ENCODE measurements at regions of chr12 and their contacts with region 1.

Region 1: GRCh38 chr12:50504798-50505385 is at the start of gene DIP2B:
- DNase-seq: peak; percentile 60
- H3K4me3 ChIP-seq: peak within 1 kb of the TSS; percentile 90
- H3K27ac ChIP-seq: peak within 1 kb of the TSS; percentile 57
- H3K27me3 ChIP-seq: no peaks in the 10 kb centered on the region
- CTCF ChIP-seq: peak; percentile 91
- polyA plus RNA-seq, gene DIP2B: 18.9 and 22.0 TPM in 2 replicates

Region 2: DNA sequence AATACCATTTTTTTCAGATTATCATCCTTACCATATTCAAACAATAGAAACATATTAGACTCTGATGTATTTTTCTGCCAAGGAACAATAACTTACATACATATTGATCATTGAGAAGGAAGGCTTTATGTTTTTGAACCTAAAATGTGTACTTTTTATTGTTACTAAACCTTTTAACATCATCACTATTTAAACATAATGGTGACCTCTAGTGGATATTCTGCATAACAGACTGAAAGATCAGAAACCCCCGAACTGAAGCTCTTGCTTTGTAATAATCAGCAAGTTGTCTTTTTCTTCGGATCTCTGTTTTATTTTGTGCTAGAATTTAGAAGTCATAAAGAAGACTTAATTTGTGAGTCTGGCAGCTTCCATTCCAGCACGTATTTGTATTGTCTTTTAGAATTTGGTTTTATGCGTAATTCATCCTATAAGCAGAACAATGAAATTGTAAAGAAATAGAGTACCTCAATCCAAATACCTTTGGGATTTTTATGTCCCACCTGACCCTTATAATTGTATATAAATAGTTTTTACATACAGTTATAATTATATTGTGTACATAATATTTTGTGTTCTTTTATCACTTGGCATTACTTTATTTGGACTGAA is 133.1 kb after region 1 on chr12:
- CTCF ChIA-PET with region 1: interaction called, 29 read pairs
- POLR2A ChIA-PET with region 1: no interaction called
- DNase-seq: no peak
- H3K4me3 ChIP-seq: no peak overlapping the region
- H3K27ac ChIP-seq: no peak overlapping the region
- H3K27me3 ChIP-seq: no peaks in the 10 kb centered on the region
- CTCF ChIP-seq: peak; percentile 59

Region 3: GRCh38 chr12:50734409-50735263 is 229.7 kb after region 1 on chr12:
- CTCF ChIA-PET with region 1: interaction called, 17 read pairs
- POLR2A ChIA-PET with region 1: no interaction called
- DNase-seq: no peak
- H3K4me3 ChIP-seq: no peak overlapping the region
- H3K27ac ChIP-seq: no peak overlapping the region
- H3K27me3 ChIP-seq: no peaks in the 10 kb centered on the region
- CTCF ChIP-seq: peak; percentile 75

Measured in AG04450 (cell line).